ENCODE measurements at regions of chr5 and their contacts with region 1.

Region 1: DNA sequence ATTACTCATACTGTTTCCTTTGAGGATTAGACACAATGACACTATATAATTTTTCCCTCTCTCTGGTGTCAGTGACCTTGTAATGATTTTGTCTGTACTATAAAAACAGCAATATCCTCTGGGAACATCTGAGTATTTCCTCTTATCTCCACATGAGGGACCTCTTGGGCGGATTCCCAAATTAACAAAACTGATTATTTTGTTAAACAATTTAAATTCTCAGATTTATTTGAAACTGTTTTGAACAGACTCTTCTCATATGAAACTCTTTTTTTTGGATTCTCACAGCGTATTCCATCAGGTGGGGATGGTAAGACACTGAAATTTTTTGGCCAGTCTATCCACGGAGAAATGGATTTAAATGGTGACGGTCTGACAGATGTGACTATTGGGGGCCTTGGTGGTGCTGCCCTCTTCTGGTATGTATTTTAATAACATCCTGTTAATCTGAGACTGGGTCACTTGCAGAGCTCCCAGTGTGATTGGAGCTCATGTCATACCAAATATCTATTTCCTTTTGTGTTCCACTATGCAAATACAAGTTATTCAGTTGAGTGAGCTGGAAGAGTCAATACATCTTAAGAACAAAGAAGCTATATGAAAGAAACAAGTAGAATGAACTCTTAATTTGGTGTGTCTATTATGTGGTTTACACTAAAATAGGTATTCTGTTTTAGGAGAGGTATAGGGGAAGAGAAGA is 73.8 kb upstream of the ITGA2 start:
- DNase-seq: peak; percentile 51
- H3K4me3 Mint-ChIP-seq: peak overlapping the region; percentile 33
- H3K27ac Mint-ChIP-seq: no peak overlapping the region
- H3K4me1 Mint-ChIP-seq: peaks cover 5% of the 10 kb centered on the region
- H3K27me3 Mint-ChIP-seq: no peaks in the 10 kb centered on the region

Region 2: DNA sequence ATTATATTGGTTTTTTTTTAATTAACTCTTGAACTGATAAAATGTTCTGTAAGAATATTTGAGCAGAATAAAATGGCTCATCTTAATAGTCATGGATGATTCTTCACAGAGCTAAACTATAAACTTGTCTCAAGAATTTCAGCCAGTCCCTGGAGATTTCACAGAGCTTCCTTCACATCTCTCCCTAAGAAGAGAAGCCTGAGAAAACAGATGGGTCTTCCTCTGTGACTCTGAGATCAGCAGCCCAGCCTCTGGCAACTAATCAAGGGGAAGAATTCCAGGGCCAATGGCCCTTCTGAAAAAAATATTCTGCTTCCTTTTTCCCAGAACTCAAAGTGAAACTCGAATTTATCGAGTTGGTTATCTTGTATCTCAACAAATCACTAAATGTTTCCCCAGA is 249.8 kb before region 1 on chr5:
- CTCF ChIA-PET with region 1: interaction called, 23 read pairs
- DNase-seq: no peak
- H3K4me3 Mint-ChIP-seq: no peak overlapping the region
- H3K27ac Mint-ChIP-seq: no peak overlapping the region
- H3K4me1 Mint-ChIP-seq: peaks cover 2% of the 10 kb centered on the region
- H3K27me3 Mint-ChIP-seq: peaks cover 6% of the 10 kb centered on the region

Region 3: DNA sequence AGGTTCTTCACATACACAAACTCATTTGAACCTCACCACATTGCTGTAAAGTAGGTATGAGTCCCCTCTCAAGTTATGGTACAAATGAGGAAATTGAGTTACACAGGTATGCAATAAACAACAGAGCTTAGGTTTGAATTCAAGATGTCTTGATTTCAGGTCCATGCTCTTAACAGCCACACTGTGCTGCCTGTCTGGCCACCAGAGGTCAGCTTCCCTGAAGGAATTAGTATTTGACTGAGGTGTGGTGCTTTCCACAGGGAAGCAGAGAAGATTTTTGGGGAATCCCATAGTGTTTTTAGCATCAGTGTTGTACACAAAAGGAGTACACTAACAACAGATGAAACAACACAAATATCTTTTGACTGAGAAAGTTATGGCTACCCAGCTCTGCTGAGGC is 222.0 kb before region 1 on chr5:
- CTCF ChIA-PET with region 1: interaction called, 36 read pairs
- DNase-seq: peak; percentile 55
- H3K4me3 Mint-ChIP-seq: no peak overlapping the region
- H3K27ac Mint-ChIP-seq: no peak overlapping the region
- H3K4me1 Mint-ChIP-seq: no peaks in the 10 kb centered on the region
- H3K27me3 Mint-ChIP-seq: no peaks in the 10 kb centered on the region

Region 4: DNA sequence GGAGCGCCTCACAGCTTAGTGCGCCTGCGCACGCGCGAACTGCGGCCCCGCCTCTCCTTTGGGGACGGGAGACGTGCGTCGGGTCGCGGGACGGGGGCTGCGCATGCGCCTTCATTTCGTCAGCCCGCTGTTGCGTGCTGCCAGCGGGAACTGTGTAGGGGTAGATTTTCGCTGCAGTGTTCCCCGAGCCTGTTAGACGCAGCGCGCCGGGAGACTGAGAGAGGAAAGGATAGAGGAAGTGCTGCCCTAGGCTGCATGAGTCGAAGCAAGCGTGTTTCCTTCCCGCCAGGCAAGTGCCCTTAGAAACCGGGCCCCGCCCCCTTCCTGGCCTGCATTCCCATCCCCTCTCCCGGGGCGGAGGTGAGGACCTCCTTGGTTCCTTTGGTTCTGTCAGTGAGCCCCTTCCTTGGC is 115.3 kb before region 1 on chr5:
- CTCF ChIA-PET with region 1: interaction called, 11 read pairs
- DNase-seq: peak; percentile 96
- H3K4me3 Mint-ChIP-seq: peak overlapping the region; percentile 86
- H3K27ac Mint-ChIP-seq: peak overlapping the region; percentile 91
- H3K4me1 Mint-ChIP-seq: peaks cover 58% of the 10 kb centered on the region
- H3K27me3 Mint-ChIP-seq: peaks cover 12% of the 10 kb centered on the region